Endothelial cell of umbilical vein (primary cell): ENCODE measurements at regions of chr4 and their contacts with region 1.

Region 1: DNA sequence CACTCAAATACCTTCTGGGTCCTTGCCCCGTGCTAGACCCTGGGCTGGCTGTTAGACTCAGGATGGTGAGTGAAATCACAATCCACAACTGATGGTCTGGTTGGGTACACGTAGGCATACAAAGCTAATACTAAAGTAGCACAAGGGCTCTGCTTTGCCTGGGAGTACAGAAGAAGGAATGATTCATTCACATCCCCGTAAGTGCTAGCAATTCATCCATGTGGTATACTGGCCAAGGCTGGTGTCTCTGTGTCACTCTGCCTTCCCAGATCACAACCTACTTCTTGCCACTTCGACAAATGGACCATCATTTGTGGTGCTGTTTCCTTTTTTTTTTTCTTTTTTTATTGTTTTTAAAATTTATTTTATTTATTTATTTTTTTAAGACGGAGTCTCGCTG is 19.7 kb upstream of the RBM47 start:
- DNase-seq: no peak
- H3K4me3 ChIP-seq: no peak overlapping the region
- H3K27ac ChIP-seq: no peak overlapping the region
- H3K4me1 ChIP-seq: no peaks in the 10 kb centered on the region
- H3K27me3 ChIP-seq: peaks cover 0 to 4% of the 10 kb centered on the region in 2 experiments
- CTCF ChIP-seq: no peak
- POLR2A ChIP-seq: no peak

Region 2: DNA sequence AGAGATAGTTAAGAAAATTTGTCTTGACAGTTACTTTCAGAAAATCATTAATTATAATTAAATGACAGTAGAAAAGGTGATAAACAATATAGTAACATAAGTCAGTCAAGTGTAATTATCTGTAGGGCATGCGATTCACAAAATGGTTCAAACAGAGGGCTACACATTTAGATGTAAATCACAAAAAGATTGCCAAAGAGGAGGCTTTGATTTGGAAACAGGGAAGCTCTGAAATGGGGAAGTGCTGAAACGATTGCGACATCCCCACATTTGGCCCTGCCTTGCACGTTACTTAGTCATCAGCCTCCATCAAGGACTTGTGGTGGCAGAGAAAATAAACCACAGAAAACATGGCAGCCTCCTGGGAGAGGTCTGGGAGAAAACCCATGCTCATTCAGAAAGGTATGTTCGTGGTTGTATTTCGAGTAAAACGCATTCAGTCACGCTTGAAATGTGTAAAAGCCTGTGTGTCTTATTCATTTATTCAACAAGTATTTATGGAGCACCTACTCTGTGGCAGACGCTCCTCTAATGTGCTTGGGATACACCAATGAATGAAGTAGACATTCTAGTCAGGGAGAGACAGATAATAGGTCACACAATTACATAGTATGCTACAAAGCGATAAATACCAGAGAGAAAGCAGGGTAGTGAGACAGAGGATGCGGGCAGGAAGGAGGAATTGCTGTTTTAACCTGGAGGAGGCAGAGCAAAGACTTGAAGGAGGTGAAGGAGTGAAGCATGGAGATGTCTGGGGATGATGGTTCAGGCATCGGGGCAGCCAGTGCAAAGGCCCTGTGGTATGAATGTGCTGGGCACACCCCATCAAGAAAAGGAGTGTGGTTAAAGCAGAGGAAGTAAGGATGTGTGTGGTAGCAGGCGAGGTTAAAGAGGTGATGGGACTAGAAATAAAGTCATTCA is 27.5 kb before region 1 on chr4:
- CTCF ChIA-PET with region 1: no interaction called
- POLR2A ChIA-PET with region 1: interaction called, 11 read pairs
- dilution Hi-C with region 1: no loop called
- intact Hi-C with region 1: no loop called
- DNase-seq: no peak
- H3K4me3 ChIP-seq: no peak overlapping the region
- H3K27ac ChIP-seq: no peak overlapping the region
- H3K4me1 ChIP-seq: no peaks in the 10 kb centered on the region
- H3K27me3 ChIP-seq: peaks cover 11 to 12% of the 10 kb centered on the region in 2 experiments
- CTCF ChIP-seq: no peak
- POLR2A ChIP-seq: no peak